Activated B cell treated with CpG ODN at 0.5 μM for 24 hours (primary cell): ENCODE measurements at regions of chr21 and their contacts with region 1.

Region 1: GRCh38 chr21:39518138-39518846 is 66.5 kb downstream of the SH3BGR start:
- DNase-seq: no peak
- ATAC-seq: peak; percentile 60
- H3K4me3 Mint-ChIP-seq: no peak overlapping the region
- H3K27ac Mint-ChIP-seq: no peak overlapping the region
- H3K4me1 Mint-ChIP-seq: peaks cover 1% of the 10 kb centered on the region
- H3K27me3 Mint-ChIP-seq: peaks cover 4% of the 10 kb centered on the region
- CTCF ChIP-seq: no peak

Region 2: GRCh38 chr21:39715804-39716397 is 197.6 kb after region 1 on chr21:
- CTCF ChIA-PET with region 1: interaction called, 12 read pairs
- POLR2A ChIA-PET with region 1: no interaction called
- intact Hi-C with region 1: no loop called
- DNase-seq: no peak
- ATAC-seq: no peak
- H3K4me3 Mint-ChIP-seq: no peak overlapping the region
- H3K27ac Mint-ChIP-seq: no peak overlapping the region
- H3K4me1 Mint-ChIP-seq: no peaks in the 10 kb centered on the region
- H3K27me3 Mint-ChIP-seq: peaks cover 3% of the 10 kb centered on the region
- CTCF ChIP-seq: peak; percentile 44

Region 3: GRCh38 chr21:39867198-39867650 is 348.9 kb after region 1 on chr21 and contains the start of gene PCP4:
- CTCF ChIA-PET with region 1: no interaction called
- POLR2A ChIA-PET with region 1: no interaction called
- intact Hi-C with region 1: no loop called
- DNase-seq: no peak
- ATAC-seq: no peak
- H3K4me3 Mint-ChIP-seq: no peak within 1 kb of the TSS
- H3K27ac Mint-ChIP-seq: no peak within 1 kb of the TSS
- H3K4me1 Mint-ChIP-seq: no peaks in the 10 kb centered on the region
- H3K27me3 Mint-ChIP-seq: no peaks in the 10 kb centered on the region
- CTCF ChIP-seq: no peak
- total RNA-seq, gene PCP4: not detected in 2 replicates

Region 4: DNA sequence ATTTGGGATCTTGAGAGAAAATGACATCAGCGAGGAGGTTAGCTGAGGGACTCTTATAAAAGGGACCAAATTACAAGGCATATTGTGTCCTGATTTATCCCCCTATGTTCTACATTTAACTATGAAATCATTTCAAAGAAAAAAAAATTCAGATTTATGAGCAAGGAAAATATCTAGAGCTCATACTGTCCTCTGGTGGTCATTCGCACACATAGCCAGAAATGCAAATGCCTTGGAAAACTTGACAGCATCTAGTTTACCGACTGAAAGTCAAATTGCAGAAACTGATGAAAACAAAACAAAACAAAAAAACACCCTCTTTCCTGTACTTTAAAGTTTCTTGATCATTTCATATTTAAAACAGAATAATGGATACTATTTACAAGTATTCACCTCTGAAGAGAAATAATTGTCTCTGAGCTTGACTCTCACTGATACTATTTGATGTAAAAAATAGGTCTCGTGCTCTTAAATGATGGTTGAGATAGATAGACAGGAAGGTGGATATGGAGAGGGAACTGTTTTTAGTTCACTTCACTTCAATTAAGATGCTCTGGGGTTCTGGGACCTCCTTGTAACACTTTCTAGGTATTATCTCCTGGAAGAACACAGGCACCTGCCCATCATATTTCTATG is 602.8 kb after region 1 on chr21:
- CTCF ChIA-PET with region 1: no interaction called
- POLR2A ChIA-PET with region 1: no interaction called
- intact Hi-C with region 1: loop called (anchors 5 kb)
- DNase-seq: no peak
- ATAC-seq: no peak
- H3K4me3 Mint-ChIP-seq: no peak overlapping the region
- H3K27ac Mint-ChIP-seq: no peak overlapping the region
- H3K4me1 Mint-ChIP-seq: no peaks in the 10 kb centered on the region
- H3K27me3 Mint-ChIP-seq: no peaks in the 10 kb centered on the region
- CTCF ChIP-seq: no peak

Region 5: DNA sequence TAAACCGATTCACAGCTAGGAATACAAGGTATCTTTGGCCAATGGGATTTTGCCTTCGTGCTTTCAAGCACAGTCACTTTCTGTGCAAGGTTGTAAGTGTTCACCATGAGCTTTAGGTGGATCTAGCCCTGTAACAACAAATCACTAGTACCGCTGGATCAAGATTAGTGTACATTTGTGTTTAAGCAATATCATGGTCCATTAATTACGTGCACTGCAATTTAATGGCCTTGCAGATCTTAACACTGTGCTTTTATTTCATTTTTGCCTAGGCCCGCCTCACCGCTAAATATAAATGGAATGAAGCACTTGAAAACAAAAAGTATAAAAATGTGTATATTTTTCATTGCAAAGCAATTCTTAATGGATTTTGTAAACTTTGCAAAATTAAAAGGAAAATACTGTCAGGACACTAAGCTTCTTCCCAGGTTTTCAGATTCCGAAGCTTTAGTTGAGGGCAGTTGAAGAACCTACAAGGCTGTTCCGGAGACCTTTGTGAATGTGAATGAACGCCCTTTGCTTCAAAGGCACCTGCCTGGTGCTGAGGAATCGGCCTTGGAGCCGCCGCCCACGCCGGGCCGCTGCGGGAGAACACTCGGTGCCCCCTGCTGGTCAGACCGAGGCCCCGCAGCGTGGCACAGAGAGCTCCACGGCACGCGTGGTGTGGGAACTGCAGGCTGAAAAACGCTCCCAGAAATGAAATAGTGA is 867.8 kb after region 1 on chr21:
- CTCF ChIA-PET with region 1: interaction called, 3 read pairs
- POLR2A ChIA-PET with region 1: no interaction called
- intact Hi-C with region 1: loop called (anchors 5 kb)
- DNase-seq: no peak
- ATAC-seq: no peak
- H3K4me3 Mint-ChIP-seq: no peak overlapping the region
- H3K27ac Mint-ChIP-seq: no peak overlapping the region
- H3K4me1 Mint-ChIP-seq: no peaks in the 10 kb centered on the region
- H3K27me3 Mint-ChIP-seq: no peaks in the 10 kb centered on the region
- CTCF ChIP-seq: no peak